ENCODE measurements at regions of chr1 and their contacts with region 1.

Region 1: DNA sequence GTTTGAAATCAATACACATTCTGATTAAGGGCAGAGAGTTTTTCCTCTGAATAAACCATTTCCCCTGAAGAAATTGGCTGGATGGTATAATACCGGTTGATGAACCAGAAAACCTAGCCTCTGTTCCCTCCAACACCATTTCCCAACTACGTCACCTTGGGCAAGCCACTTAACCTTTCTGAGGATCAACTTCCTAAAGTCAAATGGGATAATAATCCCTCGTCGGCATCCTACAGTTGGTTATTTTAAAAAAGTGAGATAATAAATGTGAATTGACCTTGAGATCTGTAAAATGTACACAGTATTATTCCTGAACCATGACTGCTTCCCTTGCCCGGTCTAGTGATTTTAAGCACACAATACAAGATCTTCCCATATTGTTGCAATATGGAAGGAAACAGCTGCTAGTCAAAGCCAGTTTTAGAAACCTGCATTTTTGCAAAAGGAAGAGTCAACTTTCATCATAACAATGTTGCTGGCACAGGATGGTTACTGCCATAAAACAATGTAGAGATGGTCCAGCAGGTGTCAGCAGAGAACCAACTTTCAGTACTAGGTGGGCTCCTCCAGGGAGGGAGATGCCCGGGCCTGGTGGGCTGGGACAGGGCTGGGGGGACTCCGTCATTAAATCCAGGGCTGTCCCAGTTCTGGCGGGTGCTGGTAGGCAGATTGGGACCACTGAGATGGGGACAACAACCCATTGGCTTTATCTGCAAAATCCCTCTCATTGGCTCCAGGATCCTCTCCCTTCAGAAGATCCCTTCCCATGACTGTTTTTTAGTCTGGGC is 5.2 kb upstream of the HLX start:
- DNase-seq: no peak
- ATAC-seq: peak; percentile 21

Region 2: GRCh38 chr1:220592714-220593113 is 281.3 kb before region 1 on chr1:
- intact Hi-C with region 1: no loop called
- DNase-seq: no peak
- ATAC-seq: no peak

Region 3: DNA sequence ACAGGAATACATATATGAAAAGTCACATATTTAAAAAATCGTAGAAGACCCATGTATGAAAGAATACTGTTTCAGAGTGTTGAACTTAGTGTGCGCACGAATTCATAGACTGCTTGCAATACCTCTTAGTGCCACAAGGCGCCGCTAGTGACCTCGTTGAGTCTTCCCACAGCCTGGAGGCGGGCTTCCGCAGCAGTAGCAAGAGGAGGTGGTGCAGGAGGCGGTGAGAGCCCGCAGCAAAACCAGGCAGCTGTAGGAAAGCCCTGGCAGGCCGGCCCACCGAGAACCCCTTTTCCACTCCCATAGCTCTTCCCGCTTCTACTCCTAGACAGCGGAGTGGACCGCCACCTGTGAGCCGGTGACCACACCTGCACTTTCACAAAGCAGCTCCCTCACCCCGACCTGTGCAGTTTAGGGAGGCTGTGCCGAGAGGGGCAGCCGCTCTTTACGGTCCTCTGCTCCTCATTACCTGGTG is 63.8 kb before region 1 on chr1:
- intact Hi-C with region 1: loop called (anchors 2 kb)
- DNase-seq: peak; percentile 91
- ATAC-seq: peak; percentile 77

Region 4: GRCh38 chr1:220828179-220828490 is 45.9 kb before region 1 on chr1:
- intact Hi-C with region 1: no loop called
- DNase-seq: no peak
- ATAC-seq: peak; percentile 40

Region 5: GRCh38 chr1:220908757-220909156 is 34.7 kb after region 1 on chr1:
- intact Hi-C with region 1: no loop called
- DNase-seq: no peak
- ATAC-seq: no peak